Dendritic cell treated with granulocyte-macrophage colony-stimulating factor and Interleukin-4, amounts not matched to agents 40 ng/mL and 50 ng/mL, for 4 days (primary cell): ENCODE measurements at regions of chr12 and their contacts with region 1.

Region 1: GRCh38 chr12:92561543-92561899 is 141.3 kb upstream of the PLEKHG7 start:
- H3K4me3 Mint-ChIP-seq: no peak overlapping the region
- H3K27ac Mint-ChIP-seq: no peak overlapping the region
- H3K4me1 Mint-ChIP-seq: no peaks in the 10 kb centered on the region
- H3K27me3 Mint-ChIP-seq: no peaks in the 10 kb centered on the region

Region 2: DNA sequence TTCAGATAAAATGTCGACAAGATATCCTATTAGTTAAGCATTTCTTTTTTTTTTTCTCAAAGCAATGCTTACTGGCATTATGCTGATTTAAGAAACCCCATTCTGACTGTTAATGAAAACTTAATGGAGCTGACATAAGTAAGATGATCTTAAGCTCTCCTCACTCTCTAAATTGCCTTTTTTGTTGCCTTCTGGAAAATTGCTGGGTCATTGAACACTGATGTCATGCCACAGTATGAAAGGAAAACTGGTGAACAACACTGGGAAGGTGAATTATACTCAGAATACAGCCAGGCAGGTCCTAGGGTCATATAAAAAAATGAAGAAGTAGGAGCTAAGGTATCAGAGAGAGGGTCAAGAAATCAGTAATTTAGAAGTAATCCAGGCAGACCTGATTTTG is 595.7 kb before region 1 on chr12:
- intact Hi-C with region 1: no loop called
- H3K4me3 Mint-ChIP-seq: no peak overlapping the region
- H3K27ac Mint-ChIP-seq: no peak overlapping the region
- H3K4me1 Mint-ChIP-seq: peaks cover 5% of the 10 kb centered on the region
- H3K27me3 Mint-ChIP-seq: no peaks in the 10 kb centered on the region

Region 3: GRCh38 chr12:92424338-92424737 is 137.2 kb before region 1 on chr12:
- intact Hi-C with region 1: loop called (anchors 10 kb)
- H3K4me3 Mint-ChIP-seq: no peak overlapping the region
- H3K27ac Mint-ChIP-seq: no peak overlapping the region
- H3K4me1 Mint-ChIP-seq: no peaks in the 10 kb centered on the region
- H3K27me3 Mint-ChIP-seq: peaks cover 1% of the 10 kb centered on the region

Region 4: DNA sequence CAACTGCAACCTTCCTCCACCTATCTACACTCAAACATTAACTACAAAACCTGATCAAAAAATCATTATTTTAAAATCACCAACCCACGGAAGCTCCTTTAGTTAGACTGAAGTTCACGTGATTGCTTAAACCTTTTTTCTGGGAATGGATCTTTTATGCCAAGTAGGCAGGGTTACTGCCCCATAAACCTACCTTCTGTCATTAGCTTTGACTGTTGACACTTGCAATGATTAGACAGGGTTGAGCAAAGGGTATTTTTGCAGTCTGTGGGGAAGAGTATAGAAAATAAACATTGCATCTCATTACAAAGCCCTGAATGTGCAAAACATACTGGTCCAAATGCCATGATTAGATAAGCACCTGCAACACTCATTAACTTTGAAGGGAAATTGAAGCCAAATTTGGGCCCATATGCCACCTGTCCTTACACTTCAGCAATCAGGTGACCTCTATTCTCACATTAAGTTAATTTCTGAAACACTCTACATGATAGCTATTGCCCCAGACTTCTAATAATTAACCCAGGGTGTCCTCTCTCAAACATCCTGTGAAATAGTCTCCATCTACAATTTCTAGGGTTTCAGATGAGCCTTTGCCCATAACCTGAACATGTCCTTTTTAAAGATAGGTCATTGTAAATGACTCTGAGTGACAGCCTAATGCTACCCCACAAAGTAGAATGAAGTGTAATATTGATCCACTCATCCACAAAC is 14.7 kb before region 1 on chr12:
- intact Hi-C with region 1: no loop called
- H3K4me3 Mint-ChIP-seq: no peak overlapping the region
- H3K27ac Mint-ChIP-seq: no peak overlapping the region
- H3K4me1 Mint-ChIP-seq: peaks cover 29% of the 10 kb centered on the region
- H3K27me3 Mint-ChIP-seq: no peaks in the 10 kb centered on the region

Region 5: DNA sequence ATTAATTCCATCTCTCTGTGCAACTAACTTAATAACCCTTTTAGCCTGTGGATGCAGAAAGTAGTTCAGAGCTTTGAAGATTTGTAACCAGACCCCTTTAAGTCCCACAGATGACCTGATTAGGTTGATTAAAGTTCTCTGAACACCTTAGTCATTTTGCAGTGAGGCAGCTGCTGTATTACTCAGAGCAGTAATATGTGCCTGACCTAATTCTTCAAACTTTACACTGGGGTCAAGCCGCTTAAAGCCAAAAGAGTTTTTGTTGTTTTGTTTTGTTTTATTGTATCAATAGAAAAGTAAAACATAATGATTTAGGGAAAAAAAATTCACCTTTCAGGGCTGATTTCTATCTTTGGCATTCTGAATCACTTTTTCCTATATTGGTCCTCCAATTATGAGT is 62.7 kb after region 1 on chr12:
- intact Hi-C with region 1: no loop called
- H3K4me3 Mint-ChIP-seq: no peak overlapping the region
- H3K27ac Mint-ChIP-seq: no peak overlapping the region
- H3K4me1 Mint-ChIP-seq: peaks cover 9% of the 10 kb centered on the region
- H3K27me3 Mint-ChIP-seq: peaks cover 2% of the 10 kb centered on the region